ENCODE measurements at regions of chr16 and their contacts with region 1.

Region 1: DNA sequence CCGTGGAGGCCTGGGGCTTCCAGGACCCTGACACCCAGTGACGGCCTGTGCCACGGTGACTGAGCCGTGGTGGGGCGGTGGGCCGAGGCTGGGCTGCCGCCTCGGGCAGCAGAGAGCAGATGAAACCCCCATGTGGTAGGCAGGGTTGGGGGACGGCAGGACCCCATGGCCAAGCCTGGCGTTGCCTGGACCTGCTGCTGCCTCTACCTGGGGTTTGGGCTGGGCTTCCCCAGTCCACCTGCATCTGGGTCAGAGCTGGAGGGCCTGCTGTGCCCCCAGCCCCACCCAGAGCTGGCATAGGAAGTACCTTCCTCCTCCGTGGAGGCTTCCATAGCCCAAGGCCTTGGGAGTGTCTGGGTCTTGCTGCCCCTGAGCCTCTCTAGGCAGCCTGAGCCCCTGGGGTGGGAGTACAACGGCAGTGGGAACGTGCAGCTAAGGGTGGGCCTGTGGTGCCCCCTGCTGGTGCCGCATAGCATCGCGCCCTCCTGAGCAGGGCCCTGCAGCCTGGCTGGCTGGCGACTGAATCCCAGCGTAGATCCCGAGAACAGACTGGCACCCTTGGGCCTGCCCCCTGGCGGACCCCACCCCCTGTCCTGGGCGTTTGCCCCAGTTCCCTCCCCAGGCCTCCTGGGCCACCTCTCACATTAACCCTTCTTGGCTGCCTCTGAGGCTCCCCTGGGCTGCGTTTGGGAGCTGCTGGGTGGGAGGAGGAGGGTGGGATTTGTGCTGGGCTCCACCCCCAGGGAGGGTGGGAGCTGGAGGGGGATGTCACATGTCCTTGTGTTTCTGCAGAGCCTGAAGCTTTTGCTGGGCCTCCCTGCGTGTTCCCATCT is 12.6 kb upstream of the ATP6V0C start:
- DNase-seq: peak; percentile 55
- H3K27ac ChIP-seq: peak overlapping the region; percentile 10; the same call in 1 of the 2 replicates
- CTCF ChIP-seq: peak; percentile 91

Region 2: DNA sequence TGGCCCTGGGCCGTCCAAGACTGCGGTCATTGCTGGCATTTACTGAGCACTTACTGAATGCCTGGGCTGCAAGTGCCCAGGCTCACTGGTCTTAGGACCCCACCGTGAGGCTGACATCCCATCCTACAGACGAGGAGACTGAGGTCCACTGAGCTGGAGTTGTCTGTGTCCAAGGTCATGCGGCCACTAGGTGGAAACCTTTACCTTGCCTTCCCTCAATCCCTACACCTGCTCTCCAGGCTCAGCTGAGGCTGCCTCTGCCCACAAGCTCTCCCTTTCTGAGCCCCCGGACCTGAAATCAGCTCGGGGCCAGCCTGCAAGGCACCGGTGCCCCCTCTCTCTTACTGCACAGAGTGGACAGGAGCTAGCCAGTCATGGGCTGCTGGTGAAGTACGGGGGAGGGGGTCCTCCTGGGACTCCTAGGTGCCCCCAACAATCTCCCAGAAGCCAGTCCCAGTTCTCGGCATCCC is 306.2 kb before region 1 on chr16:
- CTCF ChIA-PET with region 1: interaction called, 10 read pairs
- POLR2A ChIA-PET with region 1: no interaction called
- DNase-seq: peak; percentile 55
- H3K27ac ChIP-seq: no peak overlapping the region; the same call in 1 of the 2 replicates
- CTCF ChIP-seq: peak; percentile 57

Region 3: GRCh38 chr16:2429034-2429770 is 71.9 kb before region 1 on chr16 and contains the start of gene CCNF:
- CTCF ChIA-PET with region 1: interaction called, 14 read pairs
- POLR2A ChIA-PET with region 1: interaction called, 4 read pairs
- DNase-seq: peak; percentile 99
- H3K27ac ChIP-seq: peak within 1 kb of the TSS; percentile 79
- CTCF ChIP-seq: no peak

Region 4: DNA sequence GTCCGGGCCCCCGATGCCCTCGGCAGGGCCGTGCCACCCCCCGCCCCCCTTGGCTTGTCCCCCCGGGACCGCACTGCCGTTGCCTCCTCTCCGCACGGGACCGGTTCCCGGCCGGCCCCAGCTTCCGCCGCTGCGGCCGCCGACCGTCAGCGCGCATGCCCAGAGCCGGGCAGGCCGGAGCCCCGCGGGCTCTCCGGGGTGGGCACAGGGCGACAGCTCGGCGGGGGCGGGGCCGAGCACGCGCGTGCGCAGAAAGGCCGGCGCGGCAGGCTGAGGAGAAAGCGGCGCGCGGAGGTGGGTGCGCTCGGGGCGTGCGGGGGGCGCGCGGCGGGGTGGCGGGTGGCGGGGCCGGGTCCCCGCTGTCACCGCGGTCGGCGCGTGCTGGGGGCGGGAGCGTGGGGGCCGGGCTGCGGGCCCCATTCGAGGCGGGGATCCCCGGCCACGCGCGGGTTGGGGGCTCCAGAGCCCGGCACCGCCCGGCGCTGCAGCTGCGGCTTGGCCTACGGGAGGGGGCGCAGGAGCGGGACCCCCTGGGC is 26.2 kb before region 1 on chr16 and contains the start of gene TBC1D24:
- CTCF ChIA-PET with region 1: interaction called, 12 read pairs
- POLR2A ChIA-PET with region 1: interaction called, 7 read pairs
- DNase-seq: peak; percentile 97
- H3K27ac ChIP-seq: peak within 1 kb of the TSS; percentile 85
- CTCF ChIP-seq: no peak

Region 5: GRCh38 chr16:2513405-2514322 is 12.5 kb after region 1 on chr16 and contains the start of gene ATP6V0C:
- CTCF ChIA-PET with region 1: interaction called, 14 read pairs
- POLR2A ChIA-PET with region 1: no interaction called
- DNase-seq: peak; percentile 93
- H3K27ac ChIP-seq: peak within 1 kb of the TSS; percentile 95
- CTCF ChIP-seq: no peak

Measured in RWPE1 (cell line).